ENCODE measurements at regions of chr4 and their contacts with region 1.

Region 1: DNA sequence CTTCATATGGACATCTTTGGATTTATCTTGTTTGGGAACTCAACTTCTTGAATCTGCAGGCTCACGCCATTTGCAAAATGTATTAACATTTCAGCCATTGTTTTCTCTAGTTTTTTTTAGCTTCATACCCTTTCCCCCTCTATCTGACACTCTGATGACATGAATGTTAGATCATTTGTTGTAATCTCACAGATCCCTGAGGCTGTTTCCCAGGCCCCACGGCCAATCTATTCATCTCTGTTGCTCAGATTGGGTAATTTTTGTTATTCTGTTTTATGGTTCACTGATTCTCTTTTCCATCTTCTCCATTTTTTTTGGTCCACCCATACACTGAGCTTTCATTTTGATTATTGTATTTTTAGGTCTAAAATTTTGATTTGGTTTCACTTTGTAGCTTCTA is 104.1 kb downstream of the GLRA3 start:
- DNase-seq: no peak
- ATAC-seq: no peak
- H3K4me3 ChIP-seq: no peak overlapping the region
- H3K27ac ChIP-seq: no peak overlapping the region
- H3K4me1 ChIP-seq: no peaks in the 10 kb centered on the region
- H3K27me3 ChIP-seq: no peaks in the 10 kb centered on the region
- CTCF ChIP-seq: no peak
- EP300 ChIP-seq: no peak
- POLR2A ChIP-seq: no peak
- RAD21 ChIP-seq: no peak

Region 2: GRCh38 chr4:174375422-174375821 is 349.6 kb before region 1 on chr4:
- CTCF ChIA-PET with region 1: no interaction called
- POLR2A ChIA-PET with region 1: no interaction called
- RAD21 ChIA-PET with region 1: no interaction called
- SMC1A ChIA-PET with region 1: no interaction called
- in situ Hi-C with region 1: loop called (anchors 5 kb)
- intact Hi-C with region 1: no loop called
- DNase-seq: no peak
- ATAC-seq: no peak
- H3K4me3 ChIP-seq: no peak overlapping the region
- H3K27ac ChIP-seq: no peak overlapping the region
- H3K4me1 ChIP-seq: no peaks in the 10 kb centered on the region
- H3K27me3 ChIP-seq: no peaks in the 10 kb centered on the region
- CTCF ChIP-seq: no peak
- EP300 ChIP-seq: no peak
- POLR2A ChIP-seq: no peak
- RAD21 ChIP-seq: no peak

Region 3: DNA sequence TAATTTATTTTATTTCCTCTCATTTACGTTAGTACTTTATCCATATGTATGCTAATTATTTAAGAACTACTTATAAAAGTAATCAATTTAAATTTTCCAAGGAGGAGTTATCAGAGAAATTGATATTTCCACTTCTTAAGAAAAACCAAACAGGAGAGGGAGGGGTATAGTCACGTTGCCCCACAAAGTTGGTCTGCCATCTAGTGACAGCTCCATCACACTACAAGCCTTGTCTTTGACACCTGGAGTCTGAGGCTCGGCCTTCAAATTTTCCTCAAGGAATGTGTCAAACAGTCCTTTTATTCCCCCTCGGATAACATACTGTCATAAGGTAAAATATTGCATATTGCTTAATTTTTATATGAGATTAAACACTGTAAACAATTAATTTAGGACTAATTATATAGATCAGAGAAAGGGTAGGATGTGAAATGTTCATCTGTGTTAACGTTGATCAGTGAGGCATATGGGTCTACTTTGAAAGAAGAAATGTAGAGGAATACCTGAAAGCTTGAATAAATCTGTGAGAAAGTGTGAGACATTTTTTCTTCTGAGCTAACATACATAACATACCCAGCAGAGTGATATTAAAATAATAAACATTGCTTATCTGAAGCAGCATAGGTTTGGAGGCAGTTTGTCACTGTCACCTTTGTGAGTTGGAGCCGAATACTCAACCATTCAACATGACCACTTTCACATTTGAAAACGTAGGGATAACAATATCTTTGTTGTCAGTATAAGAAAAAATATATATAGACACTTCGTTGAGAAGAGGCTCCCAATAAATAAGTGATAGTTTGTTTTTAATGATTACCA is 10.4 kb before region 1 on chr4:
- CTCF ChIA-PET with region 1: interaction called, 11 read pairs
- POLR2A ChIA-PET with region 1: no interaction called
- RAD21 ChIA-PET with region 1: no interaction called
- SMC1A ChIA-PET with region 1: interaction called, 3 read pairs
- in situ Hi-C with region 1: no loop called
- intact Hi-C with region 1: no loop called
- DNase-seq: no peak
- ATAC-seq: peak; percentile 90
- H3K4me3 ChIP-seq: no peak overlapping the region
- H3K27ac ChIP-seq: no peak overlapping the region
- H3K4me1 ChIP-seq: no peaks in the 10 kb centered on the region
- H3K27me3 ChIP-seq: 0 out of 4 replicates have a peak, but pooled peaks cover 0 to 4% of the 10 kb centered on the region in 2 experiments
- CTCF ChIP-seq: peak; percentile 74 to 80 (median 75)
- EP300 ChIP-seq: no peak
- POLR2A ChIP-seq: no peak
- RAD21 ChIP-seq: peak; percentile 56